ENCODE measurements at regions of chr3 and their contacts with region 1.

Region 1: GRCh38 chr3:129942296-129942695 is 32.2 kb upstream of the TRH start:
- DNase-seq: peak in 4 of 6 donors; percentile 36 to 65 (median 44)
- ATAC-seq: peak; percentile 50 to 95 (median 90)
- H3K4me3 ChIP-seq: no peak overlapping the region
- H3K27ac ChIP-seq: no peak overlapping the region
- H3K4me1 ChIP-seq: no peaks in the 10 kb centered on the region
- H3K27me3 ChIP-seq: no peaks in the 10 kb centered on the region
- CTCF ChIP-seq: peak; percentile 15 to 62 (median 48)

Region 2: DNA sequence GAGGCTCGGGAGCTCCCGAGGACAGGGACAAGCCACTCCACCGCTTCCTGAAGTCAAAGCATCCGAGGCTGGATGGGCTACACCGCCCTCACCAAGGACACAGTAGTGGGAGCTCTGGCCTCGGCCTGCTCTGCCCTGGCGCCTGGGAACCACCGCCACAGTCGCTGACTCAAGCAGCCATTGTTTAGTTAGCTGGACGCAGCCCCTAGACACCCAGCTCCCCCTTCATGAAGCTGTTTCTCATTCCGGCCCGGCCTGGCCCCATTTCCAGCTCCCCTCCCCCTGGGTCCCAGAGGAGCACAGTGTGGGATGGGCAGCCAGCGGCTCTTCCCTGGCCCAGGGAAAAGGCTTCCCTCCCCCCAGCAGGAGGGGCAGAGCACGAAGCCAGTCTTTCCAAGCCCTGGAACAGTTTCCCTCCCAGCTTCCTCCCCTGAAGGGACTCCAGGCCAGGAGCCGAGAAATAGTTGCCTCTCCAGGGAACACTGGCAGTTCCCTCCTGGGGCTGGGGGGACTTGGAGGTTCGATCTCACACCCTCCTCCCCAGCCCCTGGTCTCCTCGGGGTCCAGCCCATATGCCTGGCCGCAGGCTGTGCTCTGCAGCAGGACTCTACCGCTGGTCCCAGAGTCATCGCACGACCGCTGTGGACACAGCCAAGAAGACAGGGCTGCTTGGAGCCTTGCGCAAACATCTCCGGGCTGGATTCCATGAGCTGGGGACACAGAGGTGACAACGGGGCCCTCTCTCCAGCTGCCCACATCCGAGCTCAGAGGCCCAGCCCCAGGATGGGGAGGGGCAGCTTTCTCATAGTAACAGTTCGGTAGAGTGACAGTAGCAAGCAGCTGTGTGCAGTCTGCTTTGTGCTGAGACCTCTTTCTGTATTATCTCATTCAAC is 345.9 kb before region 1 on chr3:
- intact Hi-C with region 1: no loop called
- DNase-seq: peak in 1 of 6 donors; percentile 39
- ATAC-seq: peak in 3 of 4 donors; percentile 20 to 36 (median 31)
- H3K4me3 ChIP-seq: no peak overlapping the region
- H3K27ac ChIP-seq: peak overlapping the region in 2 of 4 donors; percentile 5 to 46
- H3K4me1 ChIP-seq: peaks cover 0 to 3% (median 0%) of the 10 kb centered on the region in 3 donors
- H3K27me3 ChIP-seq: no peaks in the 10 kb centered on the region
- CTCF ChIP-seq: no peak

Region 3: GRCh38 chr3:129633751-129634392 is 308.4 kb before region 1 on chr3:
- intact Hi-C with region 1: loop called (anchors 10 kb)
- DNase-seq: no peak
- ATAC-seq: no peak
- H3K4me3 ChIP-seq: no peak overlapping the region
- H3K27ac ChIP-seq: no peak overlapping the region
- H3K4me1 ChIP-seq: no peaks in the 10 kb centered on the region
- H3K27me3 ChIP-seq: no peaks in the 10 kb centered on the region
- CTCF ChIP-seq: no peak

Region 4: GRCh38 chr3:129650256-129650872 is 291.9 kb before region 1 on chr3:
- intact Hi-C with region 1: no loop called
- DNase-seq: peak in 3 of 6 donors; percentile 20 to 64 (median 34)
- ATAC-seq: peak in 3 of 4 donors; percentile 76 to 89 (median 82)
- H3K4me3 ChIP-seq: no peak overlapping the region
- H3K27ac ChIP-seq: no peak overlapping the region
- H3K4me1 ChIP-seq: no peaks in the 10 kb centered on the region
- H3K27me3 ChIP-seq: no peaks in the 10 kb centered on the region
- CTCF ChIP-seq: peak in 2 of 4 donors; percentile 34 to 35

Region 5: GRCh38 chr3:130093741-130094391 is 151.6 kb after region 1 on chr3:
- intact Hi-C with region 1: loop called in 1 of 3 experiments (anchors 10 kb)
- DNase-seq: no peak
- ATAC-seq: no peak
- H3K4me3 ChIP-seq: no peak overlapping the region
- H3K27ac ChIP-seq: no peak overlapping the region
- H3K4me1 ChIP-seq: no peaks in the 10 kb centered on the region
- H3K27me3 ChIP-seq: no peaks in the 10 kb centered on the region
- CTCF ChIP-seq: no peak